ENCODE measurements at regions of chr17 and their contacts with region 1.

Region 1: GRCh38 chr17:64506576-64507477 is at the start of gene CEP95:
- DNase-seq: peak; percentile 98
- ATAC-seq: peak; percentile 66
- H3K4me3 ChIP-seq: peak within 1 kb of the TSS; percentile 93 to 95
- H3K27ac ChIP-seq: peak within 1 kb of the TSS; percentile 90
- H3K4me1 ChIP-seq: peaks cover 12 to 28% of the 10 kb centered on the region in 2 experiments
- H3K27me3 ChIP-seq: no peaks in the 10 kb centered on the region
- CTCF ChIP-seq: no peak
- POLR2A ChIP-seq: peak; percentile 43
- RAD21 ChIP-seq: no peak
- total RNA-seq, gene CEP95: 77.0 TPM

Region 2: DNA sequence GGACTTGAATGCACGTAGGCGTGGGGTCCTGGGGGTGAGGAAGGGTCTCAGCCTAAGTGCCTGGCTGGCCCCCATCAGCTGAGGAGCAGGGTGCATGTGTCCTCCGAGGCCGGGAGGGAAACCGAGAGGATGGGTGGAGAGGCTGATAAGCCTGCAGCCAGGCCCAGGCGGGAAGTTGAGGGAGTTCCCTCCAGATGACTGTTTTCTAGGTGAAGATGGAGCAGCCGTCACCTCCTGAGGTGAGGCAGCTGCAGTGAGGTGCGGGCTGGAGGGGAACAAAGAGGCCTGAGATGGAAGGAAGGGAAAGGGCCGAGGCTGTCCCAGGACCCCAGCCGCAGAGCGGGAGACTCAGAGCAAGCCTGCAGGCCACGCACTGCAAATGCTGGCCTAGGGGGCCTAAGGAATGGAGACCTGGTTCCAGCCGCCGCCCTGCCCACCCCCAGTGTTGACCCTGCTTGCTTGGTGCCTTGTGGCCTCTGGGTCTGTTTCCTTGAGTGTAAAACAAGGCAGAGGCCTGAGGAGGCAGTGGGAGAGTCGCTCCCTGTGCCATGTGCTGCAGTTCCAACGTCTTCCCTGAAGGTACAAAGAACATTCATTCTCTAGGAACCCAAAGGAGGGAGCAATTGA is 119.2 kb before region 1 on chr17:
- CTCF ChIA-PET with region 1: no interaction called
- POLR2A ChIA-PET with region 1: no interaction called
- RAD21 ChIA-PET with region 1: no interaction called
- intact Hi-C with region 1: no loop called
- DNase-seq: no peak
- ATAC-seq: no peak
- H3K4me3 ChIP-seq: no peak overlapping the region
- H3K27ac ChIP-seq: no peak overlapping the region
- H3K4me1 ChIP-seq: peaks cover 17 to 41% of the 10 kb centered on the region in 2 experiments
- H3K27me3 ChIP-seq: no peaks in the 10 kb centered on the region
- CTCF ChIP-seq: no peak
- POLR2A ChIP-seq: no peak
- RAD21 ChIP-seq: no peak

Region 3: DNA sequence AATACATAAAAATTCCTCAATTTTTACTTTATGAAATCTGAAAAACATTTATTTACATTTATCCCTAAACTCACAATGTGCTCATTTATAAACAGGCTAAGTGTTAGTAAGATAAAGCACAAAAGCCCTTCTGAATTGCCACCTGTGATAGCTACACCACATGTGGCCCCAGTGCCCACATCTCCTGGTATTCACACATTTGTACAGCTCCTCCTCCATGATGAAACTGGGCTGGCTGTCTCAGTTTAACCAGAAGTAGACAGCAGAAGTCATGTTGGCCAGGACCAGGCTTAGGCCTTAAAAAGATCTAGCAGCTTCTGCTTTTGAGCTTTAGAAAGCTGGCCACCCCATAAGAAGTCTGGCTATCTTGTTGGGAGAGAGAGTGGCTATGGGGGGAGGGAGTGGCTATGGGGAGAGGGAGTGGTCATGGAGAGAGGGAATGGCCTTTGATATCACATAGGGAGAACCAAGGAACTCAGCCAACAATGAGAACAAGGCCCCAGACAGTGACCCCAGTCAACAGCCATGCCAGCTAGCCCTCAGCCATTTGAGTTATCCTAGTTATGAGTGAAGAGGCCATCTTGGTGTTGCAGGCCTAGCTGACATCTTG is 47.3 kb after region 1 on chr17:
- CTCF ChIA-PET with region 1: no interaction called
- POLR2A ChIA-PET with region 1: no interaction called
- RAD21 ChIA-PET with region 1: no interaction called
- intact Hi-C with region 1: no loop called
- DNase-seq: no peak
- ATAC-seq: peak; percentile 68
- H3K4me3 ChIP-seq: no peak overlapping the region
- H3K27ac ChIP-seq: no peak overlapping the region
- H3K4me1 ChIP-seq: no peaks in the 10 kb centered on the region
- H3K27me3 ChIP-seq: no peaks in the 10 kb centered on the region
- CTCF ChIP-seq: no peak
- POLR2A ChIP-seq: no peak
- RAD21 ChIP-seq: no peak

Region 4: GRCh38 chr17:64648234-64648633 is 141.4 kb after region 1 on chr17:
- CTCF ChIA-PET with region 1: no interaction called
- POLR2A ChIA-PET with region 1: interaction called, 3 read pairs
- RAD21 ChIA-PET with region 1: no interaction called
- intact Hi-C with region 1: loop called (anchors 5 kb)
- DNase-seq: no peak
- ATAC-seq: no peak
- H3K4me3 ChIP-seq: no peak overlapping the region
- H3K27ac ChIP-seq: no peak overlapping the region; the same call in 1 of the 2 replicates
- H3K4me1 ChIP-seq: peaks cover 49 to 50% of the 10 kb centered on the region in 2 experiments
- H3K27me3 ChIP-seq: no peaks in the 10 kb centered on the region
- CTCF ChIP-seq: no peak
- POLR2A ChIP-seq: no peak
- RAD21 ChIP-seq: no peak

Region 5: DNA sequence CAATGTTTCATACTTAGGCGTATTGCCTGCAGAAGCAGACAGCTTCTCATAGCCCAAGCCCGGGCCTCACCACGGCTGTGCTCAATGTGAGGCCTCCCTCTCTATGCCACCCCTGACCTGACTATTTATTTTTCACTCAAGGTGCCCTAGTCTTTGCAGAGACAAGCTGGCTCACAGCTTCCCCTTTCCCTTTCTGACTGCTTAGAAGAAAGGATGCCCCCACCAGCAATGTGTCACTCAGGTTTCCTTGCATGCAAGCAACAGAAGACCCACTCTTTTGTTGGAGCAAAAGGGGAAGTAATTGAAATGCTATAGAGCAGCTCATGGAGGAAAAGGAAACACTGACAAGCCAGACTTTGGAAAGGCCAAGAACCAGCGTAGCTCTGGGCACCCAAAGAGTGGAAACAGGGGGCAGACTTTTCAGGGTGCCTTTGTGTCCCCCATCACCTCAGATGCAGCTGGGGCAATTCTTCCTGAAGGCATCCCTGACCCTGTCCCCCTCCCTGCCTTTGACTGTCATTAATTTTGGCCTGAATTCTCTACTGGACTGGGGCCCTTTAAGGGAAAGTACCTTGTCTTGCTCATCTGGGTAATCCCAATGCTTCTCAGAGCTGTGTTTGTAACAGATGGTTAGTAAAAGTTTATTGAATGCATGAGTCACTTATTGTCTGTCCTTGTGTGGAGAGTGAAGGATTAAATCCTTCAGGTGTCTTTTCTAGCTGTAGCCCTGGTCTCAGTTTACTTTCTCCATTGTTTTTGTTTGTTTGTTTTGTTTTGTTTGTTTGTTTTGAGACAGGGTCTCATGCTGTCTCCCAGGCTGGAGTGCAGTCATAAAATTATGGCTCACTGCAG is 648.2 kb after region 1 on chr17:
- CTCF ChIA-PET with region 1: no interaction called
- POLR2A ChIA-PET with region 1: no interaction called
- RAD21 ChIA-PET with region 1: no interaction called
- intact Hi-C with region 1: no loop called
- DNase-seq: no peak
- ATAC-seq: no peak
- H3K4me3 ChIP-seq: no peak overlapping the region
- H3K27ac ChIP-seq: no peak overlapping the region
- H3K4me1 ChIP-seq: no peaks in the 10 kb centered on the region
- H3K27me3 ChIP-seq: peaks cover 3% of the 10 kb centered on the region; the same call in 1 of the 2 replicates
- CTCF ChIP-seq: no peak
- POLR2A ChIP-seq: no peak
- RAD21 ChIP-seq: no peak

Measured in HCT116 (cell line).